CD4-positive, alpha-beta memory T cell (primary cell): ENCODE measurements at regions of chr20 and their contacts with region 1.

Region 1: GRCh38 chr20:25696384-25697131 is at the start of gene ZNF337:
- DNase-seq: peak; percentile 88 to 92 (median 90)
- H3K4me3 ChIP-seq: peak within 1 kb of the TSS; percentile 63 to 79
- H3K4me3 Mint-ChIP-seq: peak within 1 kb of the TSS; percentile 92 to 99 (median 96)
- H3K27ac ChIP-seq: peak within 1 kb of the TSS; percentile 71
- H3K27ac Mint-ChIP-seq: peak within 1 kb of the TSS; percentile 93 to 97 (median 94)
- H3K4me1 ChIP-seq: peaks cover 19% of the 10 kb centered on the region
- H3K4me1 Mint-ChIP-seq: peaks cover 27 to 48% (median 35%) of the 10 kb centered on the region in 4 donors
- H3K27me3 ChIP-seq: no peaks in the 10 kb centered on the region
- H3K27me3 Mint-ChIP-seq: no peaks in the 10 kb centered on the region
- total RNA-seq, gene ZNF337: 34.8 to 36.6 TPM

Region 2: GRCh38 chr20:25623736-25624499 is 72.6 kb before region 1 on chr20 and contains the start of gene NANP:
- CTCF ChIA-PET with region 1: no interaction called
- POLR2A ChIA-PET with region 1: no interaction called
- intact Hi-C with region 1: loop called (anchors 1 kb)
- DNase-seq: peak; percentile 79 to 84 (median 83)
- H3K4me3 ChIP-seq: peak within 1 kb of the TSS; percentile 56 to 73
- H3K4me3 Mint-ChIP-seq: peak within 1 kb of the TSS; percentile 92 to 97 (median 96)
- H3K27ac ChIP-seq: peak within 1 kb of the TSS; percentile 50
- H3K27ac Mint-ChIP-seq: peak within 1 kb of the TSS; percentile 78 to 97 (median 95)
- H3K4me1 ChIP-seq: peaks cover 16% of the 10 kb centered on the region
- H3K4me1 Mint-ChIP-seq: peaks cover 14 to 25% (median 17%) of the 10 kb centered on the region in 4 donors
- H3K27me3 ChIP-seq: no peaks in the 10 kb centered on the region
- H3K27me3 Mint-ChIP-seq: no peaks in the 10 kb centered on the region
- total RNA-seq, gene NANP: 1.9 to 2.0 TPM

Region 3: DNA sequence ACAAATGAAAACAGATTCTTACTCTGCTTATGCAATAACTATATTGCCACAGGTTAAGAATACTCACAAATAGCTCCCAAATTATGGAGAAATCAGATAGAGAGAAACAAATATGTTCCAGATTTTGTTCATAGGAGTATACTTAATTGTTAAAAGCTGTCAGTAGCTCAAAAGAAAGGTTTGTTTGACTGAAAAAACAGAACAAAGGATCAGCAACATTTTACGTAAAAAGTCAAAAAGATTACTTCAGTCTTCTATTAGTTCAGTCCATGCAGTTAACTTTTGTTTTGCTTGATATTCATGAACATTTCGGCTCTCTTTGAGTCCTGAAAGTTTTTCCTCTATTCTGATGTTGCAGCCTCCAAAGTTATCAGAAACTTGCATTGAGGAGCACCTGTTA is 59.3 kb before region 1 on chr20:
- CTCF ChIA-PET with region 1: no interaction called
- POLR2A ChIA-PET with region 1: no interaction called
- intact Hi-C with region 1: no loop called
- DNase-seq: no peak
- H3K4me3 ChIP-seq: no peak overlapping the region
- H3K4me3 Mint-ChIP-seq: no peak overlapping the region
- H3K27ac ChIP-seq: no peak overlapping the region
- H3K27ac Mint-ChIP-seq: no peak overlapping the region
- H3K4me1 ChIP-seq: no peaks in the 10 kb centered on the region
- H3K4me1 Mint-ChIP-seq: peaks cover 0 to 2% (median 0%) of the 10 kb centered on the region in 4 donors
- H3K27me3 ChIP-seq: no peaks in the 10 kb centered on the region
- H3K27me3 Mint-ChIP-seq: no peaks in the 10 kb centered on the region

Region 4: GRCh38 chr20:25676164-25676806 is 20.3 kb before region 1 on chr20:
- CTCF ChIA-PET with region 1: no interaction called
- POLR2A ChIA-PET with region 1: no interaction called
- intact Hi-C with region 1: no loop called
- DNase-seq: no peak
- H3K4me3 ChIP-seq: no peak overlapping the region
- H3K4me3 Mint-ChIP-seq: no peak overlapping the region
- H3K27ac ChIP-seq: no peak overlapping the region
- H3K27ac Mint-ChIP-seq: peak overlapping the region in 1 of 7 donors; percentile 52
- H3K4me1 ChIP-seq: no peaks in the 10 kb centered on the region
- H3K4me1 Mint-ChIP-seq: peaks cover 0 to 15% (median 7%) of the 10 kb centered on the region in 4 donors
- H3K27me3 ChIP-seq: no peaks in the 10 kb centered on the region
- H3K27me3 Mint-ChIP-seq: no peaks in the 10 kb centered on the region

Region 5: GRCh38 chr20:25706793-25707192 is 10.2 kb after region 1 on chr20:
- CTCF ChIA-PET with region 1: no interaction called
- POLR2A ChIA-PET with region 1: interaction called, 6 read pairs
- intact Hi-C with region 1: loop called (anchors 1 kb)
- DNase-seq: peak; percentile 26 to 66 (median 38)
- H3K4me3 ChIP-seq: no peak overlapping the region
- H3K4me3 Mint-ChIP-seq: peak overlapping the region in 7 of 8 donors; percentile 49 to 88 (median 68)
- H3K27ac ChIP-seq: no peak overlapping the region
- H3K27ac Mint-ChIP-seq: peak overlapping the region; percentile 53 to 94 (median 84)
- H3K4me1 ChIP-seq: peaks cover 19% of the 10 kb centered on the region
- H3K4me1 Mint-ChIP-seq: peaks cover 14 to 41% (median 29%) of the 10 kb centered on the region in 4 donors
- H3K27me3 ChIP-seq: no peaks in the 10 kb centered on the region
- H3K27me3 Mint-ChIP-seq: no peaks in the 10 kb centered on the region

Region 6: DNA sequence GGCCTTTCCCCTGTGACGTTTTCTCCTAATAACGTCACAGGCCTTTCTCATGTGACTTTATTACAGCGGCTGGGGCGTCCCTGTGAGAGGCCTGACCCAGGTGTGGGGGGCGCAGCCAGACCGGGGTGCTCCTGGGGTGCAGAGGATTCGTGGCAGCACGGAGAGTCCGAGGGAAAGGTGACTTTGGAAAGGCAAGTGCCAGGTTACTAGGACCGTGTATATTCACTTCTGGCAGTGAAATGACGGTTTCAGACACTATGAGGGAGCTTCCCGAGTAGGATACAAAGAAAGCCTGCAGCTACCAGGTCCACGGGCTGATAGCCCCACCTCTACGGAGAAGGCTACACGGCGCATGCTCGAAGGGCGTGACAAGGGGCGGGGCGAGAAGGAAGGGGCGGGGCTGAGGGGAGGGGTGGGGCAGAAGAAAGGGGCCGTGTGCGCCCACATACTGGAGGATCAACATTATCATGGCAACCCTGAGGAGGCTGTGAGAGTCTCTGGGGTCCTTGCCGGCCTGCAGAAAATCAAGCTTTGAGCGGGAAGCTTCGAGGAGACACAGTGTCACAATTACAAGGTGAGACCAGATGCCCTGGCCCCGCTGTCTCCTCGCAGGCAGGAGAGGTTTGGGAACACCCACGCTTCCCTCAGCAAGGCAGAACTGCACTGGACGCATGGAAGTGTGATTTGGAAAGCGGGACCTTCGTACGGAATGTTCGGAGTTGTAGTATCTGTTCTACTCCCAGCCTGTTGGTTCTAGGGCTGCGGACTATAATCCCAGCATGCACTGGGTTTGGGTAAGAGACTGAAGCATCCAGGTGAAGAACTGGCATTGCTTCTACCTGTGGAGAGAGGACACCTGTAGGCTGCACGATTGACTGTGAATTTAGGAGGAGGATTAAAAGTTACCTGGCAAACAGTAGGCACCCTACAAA is 54.5 kb after region 1 on chr20:
- CTCF ChIA-PET with region 1: no interaction called
- POLR2A ChIA-PET with region 1: no interaction called
- intact Hi-C with region 1: loop called (anchors 1 kb)
- DNase-seq: peak; percentile 26 to 72 (median 44)
- H3K4me3 ChIP-seq: peak overlapping the region; percentile 47 to 54
- H3K4me3 Mint-ChIP-seq: peak overlapping the region; percentile 76 to 92 (median 88)
- H3K27ac ChIP-seq: peak overlapping the region; percentile 28
- H3K27ac Mint-ChIP-seq: peak overlapping the region; percentile 60 to 90 (median 84)
- H3K4me1 ChIP-seq: peaks cover 14% of the 10 kb centered on the region
- H3K4me1 Mint-ChIP-seq: peaks cover 3 to 31% (median 13%) of the 10 kb centered on the region in 4 donors
- H3K27me3 ChIP-seq: no peaks in the 10 kb centered on the region
- H3K27me3 Mint-ChIP-seq: no peaks in the 10 kb centered on the region

Region 7: GRCh38 chr20:25865380-25866118 is 169.0 kb after region 1 on chr20:
- CTCF ChIA-PET with region 1: no interaction called
- POLR2A ChIA-PET with region 1: no interaction called
- intact Hi-C with region 1: loop called (anchors 2 kb)
- DNase-seq: peak; percentile 67 to 79 (median 75)
- H3K4me3 ChIP-seq: peak overlapping the region in 1 of 2 donors; percentile 24
- H3K4me3 Mint-ChIP-seq: peak overlapping the region; percentile 25 to 86 (median 64)
- H3K27ac ChIP-seq: no peak overlapping the region
- H3K27ac Mint-ChIP-seq: peak overlapping the region in 3 of 7 donors; percentile 46 to 71 (median 52)
- H3K4me1 ChIP-seq: peaks cover 39% of the 10 kb centered on the region
- H3K4me1 Mint-ChIP-seq: peaks cover 21 to 62% (median 43%) of the 10 kb centered on the region in 4 donors
- H3K27me3 ChIP-seq: peaks cover 5% of the 10 kb centered on the region
- H3K27me3 Mint-ChIP-seq: peaks cover 40 to 49% of the 10 kb centered on the region in 2 donors